ENCODE measurements at regions of chr1 and their contacts with region 1.

Region 1: DNA sequence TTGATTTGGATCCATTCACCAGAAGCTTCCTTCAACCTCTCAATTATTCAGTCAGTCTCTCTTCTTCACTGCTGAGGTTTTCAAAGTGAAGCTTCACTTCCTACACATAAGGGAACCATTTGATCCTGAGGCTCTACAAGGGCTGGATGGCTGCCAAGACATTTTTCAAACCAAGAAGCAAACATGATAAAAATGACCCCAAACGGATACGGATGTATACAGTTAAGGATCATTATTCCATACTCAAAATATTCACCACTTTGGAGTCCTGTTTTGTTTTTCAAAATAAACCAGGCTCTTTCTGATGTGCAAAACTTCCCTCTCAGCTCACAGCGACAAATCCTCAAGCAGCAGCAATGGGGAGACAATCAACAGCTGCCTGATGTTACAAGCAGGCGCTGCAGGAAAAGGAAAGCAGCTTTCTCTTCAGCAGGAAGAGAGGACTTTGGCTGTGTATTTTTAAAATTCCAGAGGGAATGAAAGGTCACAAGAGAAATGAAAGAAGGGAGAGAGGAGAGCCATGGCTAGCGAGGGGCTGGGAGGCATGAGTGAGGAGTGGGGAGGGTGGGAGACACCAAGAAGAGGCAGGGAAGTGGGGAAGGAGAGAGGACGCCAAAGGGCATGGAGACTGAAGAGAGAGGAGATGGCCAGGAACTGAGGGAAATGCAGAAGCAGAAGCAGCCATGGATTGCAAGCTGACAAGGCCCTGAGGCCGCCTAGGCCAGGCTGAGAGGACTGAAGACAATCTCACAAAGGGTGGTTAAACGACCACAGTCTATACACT is 145.4 kb downstream of the SLC45A1 start:
- DNase-seq: peak in 1 of 2 donors; percentile 32
- ATAC-seq: peak; percentile 40 to 54
- H3K4me3 ChIP-seq: peak overlapping the region in 1 of 4 donors; percentile 10
- H3K27ac ChIP-seq: peak overlapping the region; percentile 65 to 83 (median 75)
- H3K4me1 ChIP-seq: peaks cover 27 to 46% of the 10 kb centered on the region in 2 donors
- H3K27me3 ChIP-seq: no peaks in the 10 kb centered on the region
- CTCF ChIP-seq: no peak
- POLR2A ChIP-seq: no peak

Region 2: DNA sequence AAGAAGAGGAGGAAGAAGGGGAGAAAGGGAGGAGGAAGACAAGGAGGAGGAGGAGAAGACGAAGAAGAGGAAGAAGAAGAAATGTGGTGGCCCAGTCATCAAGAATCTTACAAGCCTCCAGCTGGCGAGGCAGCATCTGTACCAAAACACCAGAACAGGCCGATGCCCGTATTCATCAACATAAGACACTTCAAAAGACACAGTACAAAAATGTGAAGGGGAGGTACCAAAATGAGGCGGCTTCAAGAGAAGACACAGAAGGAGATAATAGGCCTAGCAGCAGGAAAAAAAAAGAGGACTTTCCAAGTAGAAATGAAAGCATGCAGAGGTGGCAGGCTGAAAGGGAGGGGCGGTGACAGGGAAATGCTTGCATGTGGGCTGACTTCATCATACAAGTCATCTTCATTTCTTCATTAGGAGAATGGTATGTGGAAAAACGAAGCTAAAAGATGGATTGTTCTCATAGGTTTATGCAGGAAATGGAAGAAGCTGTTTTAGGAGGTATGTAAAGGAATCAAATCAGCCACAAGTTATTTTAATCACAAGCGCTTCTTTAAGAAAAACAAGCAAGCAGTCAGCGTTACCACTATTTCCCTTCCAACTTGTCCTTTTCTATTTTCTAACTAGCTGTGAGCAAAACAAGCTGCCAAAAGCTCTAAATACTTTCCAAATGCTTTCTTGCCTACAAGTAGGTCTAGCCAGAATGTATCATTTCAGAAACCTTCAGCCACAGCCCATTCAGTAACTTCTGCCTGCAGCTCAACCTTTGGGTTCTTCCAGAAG is 46.9 kb after region 1 on chr1:
- in situ Hi-C with region 1: loop called in 1 of 4 experiments (anchors 10 kb)
- intact Hi-C with region 1: no loop called
- DNase-seq: no peak
- ATAC-seq: peak; percentile 28 to 37
- H3K4me3 ChIP-seq: peak overlapping the region in 2 of 4 donors; percentile 12 to 29
- H3K27ac ChIP-seq: peak overlapping the region; percentile 62 to 74 (median 67)
- H3K4me1 ChIP-seq: peaks cover 42 to 48% of the 10 kb centered on the region in 2 donors
- H3K27me3 ChIP-seq: no peaks in the 10 kb centered on the region
- CTCF ChIP-seq: no peak
- POLR2A ChIP-seq: no peak

Region 3: DNA sequence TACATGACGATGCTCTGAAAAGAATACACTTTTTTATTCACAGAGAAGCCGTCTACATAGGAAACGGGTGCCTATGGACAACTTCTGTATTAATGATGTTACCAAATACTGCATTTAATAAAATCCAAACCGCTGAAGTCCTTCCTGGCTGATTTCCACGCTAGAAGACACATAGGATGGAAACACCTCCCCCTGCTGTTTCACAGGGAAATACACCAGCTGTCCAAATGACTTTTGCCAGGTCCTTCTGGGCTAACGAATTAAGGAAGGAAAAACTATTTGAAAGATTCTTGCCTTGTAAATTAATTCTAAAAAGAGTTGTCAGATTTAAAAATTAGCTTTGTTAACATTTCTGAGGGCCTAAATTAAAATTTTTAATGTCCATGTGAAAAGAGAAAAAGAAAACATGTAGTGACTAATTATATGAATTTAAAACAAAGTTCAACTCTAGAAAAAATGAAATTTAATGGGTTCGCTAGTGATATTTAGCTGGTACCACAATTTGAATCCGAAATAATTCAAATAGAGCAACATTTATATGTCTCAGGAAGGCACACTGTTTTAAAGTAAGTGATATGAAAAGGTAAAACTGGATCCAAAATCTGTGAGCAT is 208.1 kb after region 1 on chr1:
- in situ Hi-C with region 1: no loop called
- intact Hi-C with region 1: loop called (anchors 5 kb)
- DNase-seq: peak; percentile 20 to 34
- ATAC-seq: peak; percentile 61 to 63
- H3K4me3 ChIP-seq: peak overlapping the region in 2 of 4 donors; percentile 3 to 23
- H3K27ac ChIP-seq: peak overlapping the region in 1 of 4 donors; percentile 62
- H3K4me1 ChIP-seq: peaks cover 34 to 55% of the 10 kb centered on the region in 2 donors
- H3K27me3 ChIP-seq: no peaks in the 10 kb centered on the region
- CTCF ChIP-seq: peak; percentile 75 to 87 (median 80)
- POLR2A ChIP-seq: no peak

Region 4: GRCh38 chr1:8727809-8728213 is 264.5 kb after region 1 on chr1:
- in situ Hi-C with region 1: no loop called
- intact Hi-C with region 1: loop called (anchors 10 kb)
- DNase-seq: peak; percentile 24 to 47
- ATAC-seq: peak; percentile 44 to 73
- H3K4me3 ChIP-seq: no peak overlapping the region
- H3K27ac ChIP-seq: peak overlapping the region in 2 of 4 donors; percentile 2 to 57
- H3K4me1 ChIP-seq: peaks cover 30 to 33% of the 10 kb centered on the region in 2 donors
- H3K27me3 ChIP-seq: no peaks in the 10 kb centered on the region
- CTCF ChIP-seq: no peak
- POLR2A ChIP-seq: no peak

Measured in gastrocnemius medialis (tissue), 4 donors.